GM10248 (cell line): ENCODE measurements at regions of chr1 and their contacts with region 1.

Region 1: DNA sequence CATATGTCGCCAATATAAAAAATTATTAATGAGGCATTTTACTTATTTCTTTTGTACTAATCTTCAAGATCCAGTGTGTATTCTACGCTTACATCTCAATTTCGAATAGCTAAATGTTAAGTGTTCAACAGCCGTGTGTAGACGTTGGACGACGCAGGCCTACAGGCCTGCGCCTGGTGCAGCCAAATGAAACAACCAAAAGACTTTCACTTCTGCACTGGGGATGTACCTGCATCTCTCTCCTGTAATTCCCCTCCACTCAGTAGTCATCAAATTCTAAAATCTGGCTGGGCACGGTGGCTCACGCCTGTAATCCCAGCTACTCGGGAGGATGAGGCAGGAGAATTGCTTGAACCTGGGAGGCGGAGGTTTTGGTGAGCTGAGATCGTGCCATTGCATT is 76.8 kb upstream of the HNRNPU start:
- DNase-seq: peak; percentile 81
- CTCF ChIP-seq: no peak

Region 2: DNA sequence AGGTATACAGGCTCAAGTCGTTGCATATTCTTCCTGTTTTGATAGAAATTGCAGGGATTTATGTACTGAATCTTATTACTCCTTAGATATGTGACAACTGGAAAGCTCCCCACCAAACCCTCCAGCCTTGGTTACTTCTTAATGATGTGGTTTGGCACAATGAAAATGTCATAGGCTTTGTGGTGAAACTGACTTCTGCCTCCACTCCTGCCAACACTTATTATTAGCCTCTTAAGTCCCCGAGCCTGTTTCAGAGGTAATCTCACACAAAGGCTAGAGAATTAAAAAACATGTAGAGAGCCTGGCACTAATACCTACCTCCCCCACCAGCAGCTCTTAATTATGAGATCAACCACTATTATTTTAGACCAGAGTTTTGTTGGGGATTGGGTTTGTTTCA is 101.5 kb before region 1 on chr1:
- CTCF ChIA-PET with region 1: no interaction called
- POLR2A ChIA-PET with region 1: no interaction called
- DNase-seq: no peak
- CTCF ChIP-seq: no peak

Region 3: GRCh38 chr1:244918421-244919319 is 22.5 kb before region 1 on chr1:
- CTCF ChIA-PET with region 1: interaction called, 11 read pairs
- POLR2A ChIA-PET with region 1: no interaction called
- DNase-seq: peak; percentile 71
- CTCF ChIP-seq: no peak